ENCODE measurements at regions of chr1 and their contacts with region 1.

Region 1: DNA sequence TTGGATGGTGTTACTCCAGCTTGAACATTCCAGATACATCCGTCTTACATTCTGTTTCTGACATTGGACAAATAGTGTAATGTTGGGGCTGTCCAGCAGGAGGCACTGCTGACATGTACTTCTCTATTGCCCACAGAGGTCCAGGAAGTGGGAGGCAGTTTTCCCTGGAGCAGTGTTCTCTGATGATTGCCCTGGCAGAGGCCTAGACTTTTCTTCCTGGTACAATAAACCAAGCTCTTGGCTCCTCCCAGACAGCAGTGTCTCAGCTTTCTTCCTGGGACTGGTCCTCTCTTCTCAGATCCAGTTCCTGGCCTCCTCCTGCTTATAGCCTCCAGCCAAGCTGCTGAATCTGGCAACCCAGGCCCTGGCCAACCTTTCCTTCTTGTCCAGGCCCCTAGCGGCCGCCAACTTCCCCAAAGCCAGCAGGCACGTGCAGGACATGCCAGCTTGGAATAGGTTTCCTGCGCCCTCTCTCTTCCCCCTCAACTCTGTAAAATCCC is 14.9 kb upstream of the IFNLR1 start:
- DNase-seq: peak; percentile 53
- H3K4me3 ChIP-seq: no peak overlapping the region
- CTCF ChIP-seq: peak; percentile 84

Region 2: DNA sequence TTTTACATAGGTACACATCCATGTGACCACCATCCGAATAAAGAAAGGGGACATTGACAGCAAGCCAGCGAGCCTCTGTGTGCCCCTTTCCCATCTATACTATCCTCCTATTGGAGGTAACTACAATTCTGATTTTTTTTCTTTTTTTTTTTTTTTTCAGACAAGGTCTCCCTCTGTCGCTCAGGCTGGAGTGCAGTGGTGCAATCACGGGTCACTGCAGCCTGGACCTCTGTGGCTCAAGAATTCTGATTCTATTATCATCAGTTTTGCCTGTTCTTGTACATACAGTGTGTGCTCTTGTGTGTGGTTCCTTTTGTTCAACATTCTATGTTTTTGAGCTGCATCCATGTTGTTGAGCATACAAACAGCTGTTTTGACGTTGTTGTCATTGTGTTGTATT is 165.9 kb before region 1 on chr1:
- CTCF ChIA-PET with region 1: no interaction called
- POLR2A ChIA-PET with region 1: no interaction called
- DNase-seq: no peak
- H3K4me3 ChIP-seq: no peak overlapping the region
- CTCF ChIP-seq: no peak

Region 3: GRCh38 chr1:24108334-24109165 is 93.4 kb before region 1 on chr1:
- CTCF ChIA-PET with region 1: no interaction called
- POLR2A ChIA-PET with region 1: no interaction called
- DNase-seq: peak; percentile 37
- H3K4me3 ChIP-seq: no peak overlapping the region
- CTCF ChIP-seq: no peak

Region 4: DNA sequence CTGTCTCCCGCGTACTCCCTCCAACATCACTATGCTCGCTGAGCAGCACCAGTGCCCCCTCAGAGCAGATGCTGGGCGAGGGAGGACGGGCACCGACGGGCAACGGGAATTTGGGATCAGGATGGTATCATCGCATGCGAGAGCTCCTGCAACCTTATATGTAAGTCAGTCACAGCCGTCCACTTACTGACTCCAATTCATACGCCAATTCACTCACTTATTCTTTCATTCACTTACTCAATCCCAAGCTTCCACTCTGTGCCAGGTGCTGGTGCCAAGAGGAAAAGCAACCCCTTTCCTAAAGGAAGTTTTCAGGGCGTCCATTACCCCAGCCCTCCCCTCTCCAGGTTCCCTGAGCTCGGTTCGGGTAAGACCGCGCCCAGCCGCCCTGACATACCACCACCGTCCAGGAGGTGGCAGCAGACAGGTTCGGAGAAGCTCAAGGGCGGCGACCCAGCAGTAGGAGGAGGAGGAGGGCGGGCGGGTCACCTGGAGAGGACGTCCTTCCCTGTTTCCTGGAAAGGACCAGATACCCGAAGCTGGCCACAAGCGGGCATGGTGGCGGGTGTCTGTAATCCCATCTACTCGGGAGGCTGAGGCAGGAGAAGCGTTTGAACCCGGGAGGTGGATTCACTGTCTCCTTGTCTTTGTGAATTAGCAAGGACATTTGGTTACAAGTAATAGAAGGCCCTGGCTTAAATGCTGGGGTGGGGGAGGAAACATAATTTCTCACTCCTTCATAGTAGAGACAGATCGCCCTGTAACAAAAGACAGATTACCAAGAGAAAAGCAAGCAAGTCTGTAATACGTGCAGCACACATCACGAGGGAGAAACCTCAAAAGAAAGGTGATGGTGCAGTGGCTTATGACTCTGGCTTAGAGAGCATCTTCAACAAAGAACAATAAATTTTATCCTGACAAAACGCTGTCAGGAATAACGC is 51.5 kb before region 1 on chr1:
- CTCF ChIA-PET with region 1: interaction called, 18 read pairs
- POLR2A ChIA-PET with region 1: interaction called, 3 read pairs
- DNase-seq: no peak
- H3K4me3 ChIP-seq: no peak overlapping the region; the same call in 1 of the 2 replicates
- CTCF ChIP-seq: peak; percentile 94

Region 5: GRCh38 chr1:24289937-24290595 is 88.1 kb after region 1 on chr1:
- CTCF ChIA-PET with region 1: interaction called, 14 read pairs
- POLR2A ChIA-PET with region 1: no interaction called
- DNase-seq: peak; percentile 66
- H3K4me3 ChIP-seq: no peak overlapping the region
- CTCF ChIP-seq: no peak

Region 6: GRCh38 chr1:24364975-24365678 is 163.1 kb after region 1 on chr1:
- CTCF ChIA-PET with region 1: interaction called, 53 read pairs
- POLR2A ChIA-PET with region 1: no interaction called
- DNase-seq: no peak
- H3K4me3 ChIP-seq: no peak overlapping the region
- CTCF ChIP-seq: no peak

Region 7: DNA sequence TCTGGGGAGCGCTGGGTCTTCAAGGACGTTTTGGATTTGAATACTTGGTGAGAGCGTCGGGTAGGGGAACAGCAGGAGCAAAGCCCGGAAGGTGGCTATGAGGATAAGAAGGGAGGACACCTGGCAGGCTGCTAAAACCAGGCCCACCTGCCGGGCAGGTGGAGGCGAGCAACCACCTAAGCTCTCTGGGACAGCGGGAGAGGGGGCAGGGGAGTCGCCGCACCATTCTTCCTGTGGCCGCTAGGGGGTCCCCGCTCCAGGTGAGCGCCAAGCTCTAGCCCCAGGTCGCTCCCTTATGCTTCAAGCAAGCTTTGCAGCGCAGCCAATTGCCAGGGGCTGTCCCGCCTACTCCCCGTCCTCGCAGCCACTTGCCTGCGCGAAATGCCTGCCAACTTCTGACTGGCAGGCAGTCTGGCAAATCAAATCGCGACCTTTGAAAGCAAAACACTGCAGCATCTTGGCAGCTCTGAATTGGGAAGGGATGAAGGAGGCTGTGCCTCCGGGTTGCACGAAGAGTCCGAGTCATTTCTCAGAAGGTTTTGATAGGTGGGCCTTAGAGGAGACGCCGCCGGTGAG is 213.4 kb after region 1 on chr1 and contains the start of gene NIPAL3:
- CTCF ChIA-PET with region 1: interaction called, 154 read pairs
- POLR2A ChIA-PET with region 1: no interaction called
- DNase-seq: peak; percentile 96
- H3K4me3 ChIP-seq: peak within 1 kb of the TSS; percentile 87
- CTCF ChIP-seq: peak; percentile 91

Region 8: GRCh38 chr1:24594154-24594553 is 392.2 kb after region 1 on chr1:
- CTCF ChIA-PET with region 1: interaction called, 11 read pairs
- POLR2A ChIA-PET with region 1: no interaction called
- DNase-seq: no peak
- H3K4me3 ChIP-seq: no peak overlapping the region
- CTCF ChIP-seq: no peak